ENCODE measurements at regions of chr13 and their contacts with region 1.

Region 1: DNA sequence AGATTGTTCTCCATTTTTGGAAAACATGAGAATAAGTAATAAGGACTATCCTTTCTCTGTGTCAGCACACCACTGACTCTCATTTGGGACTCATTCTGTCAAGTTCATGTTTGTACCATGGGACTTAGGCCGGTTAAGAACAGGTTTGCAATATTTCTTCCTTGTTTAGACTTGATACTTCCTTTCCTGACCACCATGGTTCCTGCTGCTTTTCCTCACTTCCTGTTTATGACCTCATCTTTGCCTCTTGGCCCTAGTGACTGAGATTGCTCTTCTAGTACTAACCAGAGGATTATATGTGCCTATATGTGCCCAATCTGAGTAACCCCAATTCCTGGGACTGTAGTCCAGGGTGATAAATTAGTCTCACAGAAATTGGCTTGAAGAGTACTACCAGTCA is 32.5 kb upstream of the NDFIP2 start:
- DNase-seq: no peak
- H3K4me3 ChIP-seq: no peak overlapping the region
- H3K27ac ChIP-seq: no peak overlapping the region
- H3K4me1 ChIP-seq: no peaks in the 10 kb centered on the region
- H3K27me3 ChIP-seq: no peaks in the 10 kb centered on the region
- CTCF ChIP-seq: no peak

Region 2: GRCh38 chr13:81334481-81334880 is 1886.1 kb after region 1 on chr13:
- intact Hi-C with region 1: loop called (anchors 10 kb)
- DNase-seq: no peak
- H3K4me3 ChIP-seq: no peak overlapping the region
- H3K27ac ChIP-seq: no peak overlapping the region
- H3K4me1 ChIP-seq: no peaks in the 10 kb centered on the region
- H3K27me3 ChIP-seq: no peaks in the 10 kb centered on the region
- CTCF ChIP-seq: no peak